IMR-90 (cell line): ENCODE measurements at regions of chr10 and their contacts with region 1.

Region 1: DNA sequence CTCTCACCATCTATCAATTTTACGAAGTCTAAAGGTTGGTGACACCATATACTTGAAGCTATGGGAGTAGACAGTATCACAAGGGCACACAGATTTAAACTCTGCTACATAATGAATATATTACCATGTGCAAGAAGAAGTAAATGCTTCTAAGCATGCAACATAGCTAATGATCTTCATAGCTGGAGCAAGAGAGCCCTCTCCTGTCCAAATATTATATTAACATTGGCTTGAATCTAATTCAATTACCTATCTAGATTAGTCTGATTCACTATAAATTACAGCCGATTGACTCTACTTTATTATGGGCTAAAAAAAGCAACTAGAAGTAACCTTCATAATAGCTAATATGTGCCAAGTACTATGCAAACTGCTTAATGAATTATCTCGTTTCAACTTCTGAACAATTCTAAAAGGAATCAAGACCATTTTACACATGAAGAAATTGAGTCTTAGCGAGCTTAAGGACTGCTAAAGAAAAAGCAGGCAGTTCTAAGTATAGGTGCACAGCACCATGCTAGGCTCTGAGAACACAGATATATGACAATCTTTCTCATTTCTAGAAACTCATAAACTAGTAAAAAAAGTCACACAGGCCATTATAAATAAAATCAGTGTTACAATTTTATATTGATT is 21.9 kb downstream of the FRA10AC1 start:
- DNase-seq: peak; percentile 37
- ATAC-seq: peak; percentile 79
- H3K4me3 ChIP-seq: no peak overlapping the region
- H3K27ac ChIP-seq: no peak overlapping the region
- H3K4me1 ChIP-seq: no peaks in the 10 kb centered on the region
- H3K27me3 ChIP-seq: no peaks in the 10 kb centered on the region
- CTCF ChIP-seq: peak; percentile 57
- POLR2A ChIP-seq: no peak
- RAD21 ChIP-seq: peak; percentile 77

Region 2: DNA sequence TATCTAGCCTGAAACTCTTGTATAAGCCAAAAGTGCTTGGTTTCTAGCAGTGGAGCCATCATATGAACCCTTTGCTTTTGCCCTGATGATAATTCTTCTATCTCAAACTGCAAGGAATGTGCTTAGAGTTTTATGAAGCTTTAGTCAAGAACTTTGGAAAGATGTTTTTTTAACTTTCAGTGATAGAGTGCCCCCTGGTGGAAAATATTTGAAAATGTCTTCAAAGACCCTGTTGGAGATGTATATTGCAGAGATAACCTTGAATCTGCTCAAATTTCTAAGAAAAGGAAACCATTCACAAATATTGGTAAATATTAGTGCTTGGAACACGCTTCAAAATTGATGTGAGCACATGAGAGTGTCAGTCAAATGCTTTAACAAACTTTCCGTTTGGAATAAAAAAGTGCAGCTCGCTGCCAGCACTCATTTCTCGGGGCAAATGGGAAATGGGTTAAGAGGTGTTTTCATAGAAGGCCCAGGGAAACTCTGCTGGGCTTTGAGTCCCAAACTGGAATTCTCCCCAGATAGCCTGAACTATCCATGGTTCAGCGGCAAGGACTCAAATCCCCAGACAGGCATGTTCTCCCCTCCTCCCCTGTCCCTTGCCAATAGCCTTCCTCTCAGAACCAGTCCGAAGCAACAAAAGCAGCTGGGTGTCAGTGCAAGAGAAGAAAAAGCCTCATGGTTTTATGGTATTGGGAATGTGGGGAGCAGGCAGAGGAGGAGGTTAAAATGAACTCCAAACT is 327.7 kb before region 1 on chr10:
- CTCF ChIA-PET with region 1: no interaction called
- POLR2A ChIA-PET with region 1: no interaction called
- dilution Hi-C with region 1: no loop called
- in situ Hi-C with region 1: loop called (anchors 25 kb)
- intact Hi-C with region 1: no loop called
- DNase-seq: peak; percentile 52
- ATAC-seq: peak; percentile 63
- H3K4me3 ChIP-seq: no peak overlapping the region
- H3K27ac ChIP-seq: no peak overlapping the region
- H3K4me1 ChIP-seq: 0 out of 2 replicates have a peak, but pooled peaks cover 1% of the 10 kb centered on the region
- H3K27me3 ChIP-seq: no peaks in the 10 kb centered on the region
- CTCF ChIP-seq: peak; percentile 60
- POLR2A ChIP-seq: no peak
- RAD21 ChIP-seq: 0 out of 2 replicates have a peak, but pooled peaks have one; percentile 21

Region 3: DNA sequence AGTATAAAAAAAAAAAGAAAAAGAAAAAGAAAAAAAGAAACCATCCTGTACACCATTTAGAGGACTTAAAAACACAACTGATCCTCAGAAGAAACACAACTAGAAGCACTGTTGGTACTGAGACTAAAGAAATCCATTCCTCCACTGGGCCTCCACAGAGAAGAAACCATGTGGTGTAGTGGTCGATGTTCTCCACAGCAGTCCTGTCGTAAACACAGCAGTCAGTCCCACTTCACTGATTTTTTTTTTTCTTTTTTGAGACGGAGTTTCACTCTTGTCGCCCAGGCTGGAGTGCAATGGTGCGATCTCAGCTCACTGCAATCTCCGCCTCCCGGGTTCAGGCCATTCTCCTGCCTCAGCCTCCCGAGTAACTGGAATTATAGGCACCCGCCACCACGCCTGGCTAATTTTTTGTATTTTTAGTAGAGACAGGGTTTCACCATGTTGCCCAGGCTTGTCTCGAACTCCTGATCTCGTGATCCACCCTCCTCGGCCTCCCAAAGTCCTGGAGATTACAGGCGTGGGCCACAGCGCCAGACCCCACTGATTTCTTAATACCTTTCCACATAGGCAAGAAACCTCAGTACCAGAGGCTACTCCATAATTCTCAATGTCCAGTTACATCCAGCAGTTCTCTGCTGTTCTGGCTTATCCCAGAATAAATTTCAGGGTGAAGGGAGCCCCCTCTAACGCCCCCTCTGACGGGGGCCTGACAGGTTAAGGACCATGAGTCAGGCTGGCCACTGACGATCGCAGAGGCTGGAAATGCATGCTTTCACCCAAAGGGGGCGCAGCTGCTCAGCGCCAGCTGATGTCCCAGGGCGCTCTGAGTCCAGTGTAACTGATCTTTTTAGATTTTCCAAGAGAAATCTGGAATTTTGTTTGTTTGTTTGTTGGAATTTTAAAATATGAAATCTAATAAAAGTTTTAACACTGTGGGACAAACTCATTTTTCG is 138.8 kb before region 1 on chr10:
- CTCF ChIA-PET with region 1: interaction called, 6 read pairs
- POLR2A ChIA-PET with region 1: no interaction called
- dilution Hi-C with region 1: no loop called
- in situ Hi-C with region 1: no loop called
- intact Hi-C with region 1: loop called (anchors 2 kb)
- DNase-seq: peak; percentile 46
- ATAC-seq: peak; percentile 99
- H3K4me3 ChIP-seq: peak overlapping the region; percentile 14; the same call in 1 of the 2 replicates
- H3K27ac ChIP-seq: no peak overlapping the region
- H3K4me1 ChIP-seq: 0 out of 2 replicates have a peak, but pooled peaks cover 2% of the 10 kb centered on the region
- H3K27me3 ChIP-seq: no peaks in the 10 kb centered on the region; the same call in 1 of the 2 replicates
- CTCF ChIP-seq: peak; percentile 85
- POLR2A ChIP-seq: no peak
- RAD21 ChIP-seq: peak; percentile 69

Region 4: DNA sequence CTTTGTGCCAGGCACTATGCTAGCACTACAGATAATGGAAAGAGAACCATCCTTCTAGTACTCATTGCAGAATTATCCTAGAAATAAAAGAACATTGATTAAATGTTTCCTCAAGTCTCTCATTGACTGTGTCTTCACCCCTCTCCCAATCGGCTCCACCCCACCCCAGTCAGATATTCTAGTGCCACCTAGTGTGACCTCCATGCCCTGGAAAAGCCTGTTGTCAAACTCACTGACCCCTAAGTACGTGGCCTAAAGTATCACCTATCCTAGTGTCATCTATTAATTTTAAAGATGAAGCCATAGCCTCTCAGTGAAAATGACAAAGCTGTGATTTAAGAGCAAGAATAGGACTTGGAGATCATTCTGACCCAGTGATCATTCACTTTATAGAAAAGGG is 103.5 kb after region 1 on chr10:
- CTCF ChIA-PET with region 1: no interaction called
- POLR2A ChIA-PET with region 1: no interaction called
- dilution Hi-C with region 1: no loop called
- in situ Hi-C with region 1: no loop called
- intact Hi-C with region 1: no loop called
- DNase-seq: no peak
- ATAC-seq: no peak
- H3K4me3 ChIP-seq: no peak overlapping the region
- H3K27ac ChIP-seq: no peak overlapping the region
- H3K4me1 ChIP-seq: no peaks in the 10 kb centered on the region
- H3K27me3 ChIP-seq: peaks cover 4% of the 10 kb centered on the region
- CTCF ChIP-seq: no peak
- POLR2A ChIP-seq: no peak
- RAD21 ChIP-seq: no peak

Region 5: DNA sequence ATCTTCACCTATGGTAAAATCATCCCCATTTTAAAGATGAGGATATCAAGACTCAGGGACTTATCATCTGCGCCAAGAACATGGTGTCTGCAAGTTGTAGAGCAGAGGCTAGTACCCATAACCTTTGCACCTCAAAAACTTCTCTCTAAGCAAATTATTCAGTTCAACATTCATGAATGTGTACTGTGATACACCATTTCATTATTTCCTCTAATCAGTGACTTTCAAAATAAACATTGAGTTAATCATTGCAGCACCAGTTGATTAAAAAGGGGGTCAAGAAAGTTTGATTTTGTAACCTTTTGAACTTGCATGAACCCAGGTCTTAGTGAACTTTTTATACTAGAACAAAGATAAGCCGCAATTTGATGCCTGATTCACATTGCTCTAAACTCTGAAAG is 1436.3 kb after region 1 on chr10:
- CTCF ChIA-PET with region 1: no interaction called
- POLR2A ChIA-PET with region 1: no interaction called
- dilution Hi-C with region 1: no loop called
- in situ Hi-C with region 1: no loop called
- intact Hi-C with region 1: no loop called
- DNase-seq: no peak
- ATAC-seq: no peak
- H3K4me3 ChIP-seq: no peak overlapping the region
- H3K27ac ChIP-seq: no peak overlapping the region
- H3K4me1 ChIP-seq: no peaks in the 10 kb centered on the region
- H3K27me3 ChIP-seq: no peaks in the 10 kb centered on the region
- CTCF ChIP-seq: no peak
- POLR2A ChIP-seq: no peak
- RAD21 ChIP-seq: no peak